ENCODE measurements at regions of chr22 and their contacts with region 1.

Region 1: DNA sequence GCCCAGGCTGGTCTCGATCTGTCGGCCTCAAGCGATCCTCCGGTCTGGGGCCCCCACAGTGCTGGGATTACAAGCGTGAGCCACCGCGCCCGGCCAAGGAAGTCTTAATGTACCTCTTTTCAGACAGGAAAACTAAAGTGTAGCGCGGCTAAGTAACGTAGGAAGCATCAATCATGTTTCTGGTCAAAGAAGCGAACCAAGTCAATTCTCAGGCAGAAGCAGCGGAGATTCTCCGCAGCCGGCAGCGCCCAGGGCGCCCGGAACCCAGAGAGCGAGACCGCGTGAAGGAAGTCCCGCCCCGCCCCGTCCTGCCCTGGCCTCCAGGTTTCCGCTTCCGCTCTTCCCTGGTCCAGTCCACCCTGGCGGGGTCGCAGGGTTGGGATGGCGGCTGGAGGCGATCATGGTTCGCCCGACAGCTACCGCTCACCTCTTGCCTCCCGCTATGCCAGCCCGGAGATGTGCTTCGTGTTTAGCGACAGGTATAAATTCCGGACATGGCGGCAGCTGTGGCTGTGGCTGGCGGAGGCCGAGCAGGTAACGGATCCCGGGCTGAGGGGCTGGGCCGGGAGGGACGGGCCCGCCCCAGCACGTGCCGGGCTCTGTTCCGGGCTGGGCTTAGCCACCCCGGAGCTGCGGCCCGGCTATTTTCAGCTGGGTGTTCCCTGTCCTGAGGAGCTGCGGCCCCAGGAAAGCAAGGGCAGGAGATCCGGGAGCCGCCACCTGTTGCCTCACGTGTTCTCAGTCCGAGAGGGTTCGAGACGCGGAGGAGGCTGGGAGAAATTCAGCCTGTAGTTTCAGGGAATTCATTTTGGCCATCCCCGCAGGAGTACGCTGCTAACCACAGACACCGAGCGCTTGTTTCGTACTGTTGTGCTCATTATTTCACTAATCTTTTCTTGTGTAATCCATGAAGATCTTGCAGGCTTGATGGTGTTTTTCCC is at the start of gene ADSL:
- DNase-seq: peak; percentile 92
- ATAC-seq: peak; percentile 90
- H3K4me3 Mint-ChIP-seq: peak within 1 kb of the TSS; percentile 96
- H3K27ac Mint-ChIP-seq: peak within 1 kb of the TSS; percentile 96
- H3K4me1 Mint-ChIP-seq: peaks cover 41% of the 10 kb centered on the region
- H3K27me3 Mint-ChIP-seq: no peaks in the 10 kb centered on the region
- CTCF ChIP-seq: no peak
- total RNA-seq, gene ADSL: 160 to 169 TPM

Region 2: GRCh38 chr22:40044102-40044869 is 302.2 kb before region 1 on chr22:
- CTCF ChIA-PET with region 1: interaction called, 35 read pairs
- POLR2A ChIA-PET with region 1: interaction called, 23 read pairs
- intact Hi-C with region 1: loop called (anchors 5 kb)
- DNase-seq: peak; percentile 99
- ATAC-seq: peak; percentile 88
- H3K4me3 Mint-ChIP-seq: peak overlapping the region; percentile 87
- H3K27ac Mint-ChIP-seq: peak overlapping the region; percentile 99
- H3K4me1 Mint-ChIP-seq: peaks cover 26% of the 10 kb centered on the region
- H3K27me3 Mint-ChIP-seq: no peaks in the 10 kb centered on the region
- CTCF ChIP-seq: no peak

Region 3: GRCh38 chr22:40107851-40108378 is 238.5 kb before region 1 on chr22:
- CTCF ChIA-PET with region 1: interaction called, 13 read pairs
- POLR2A ChIA-PET with region 1: interaction called, 3 read pairs
- intact Hi-C with region 1: no loop called
- DNase-seq: peak; percentile 65
- ATAC-seq: peak; percentile 78
- H3K4me3 Mint-ChIP-seq: peak overlapping the region; percentile 73
- H3K27ac Mint-ChIP-seq: peak overlapping the region; percentile 90
- H3K4me1 Mint-ChIP-seq: peaks cover 79% of the 10 kb centered on the region
- H3K27me3 Mint-ChIP-seq: no peaks in the 10 kb centered on the region
- CTCF ChIP-seq: no peak

Region 4: DNA sequence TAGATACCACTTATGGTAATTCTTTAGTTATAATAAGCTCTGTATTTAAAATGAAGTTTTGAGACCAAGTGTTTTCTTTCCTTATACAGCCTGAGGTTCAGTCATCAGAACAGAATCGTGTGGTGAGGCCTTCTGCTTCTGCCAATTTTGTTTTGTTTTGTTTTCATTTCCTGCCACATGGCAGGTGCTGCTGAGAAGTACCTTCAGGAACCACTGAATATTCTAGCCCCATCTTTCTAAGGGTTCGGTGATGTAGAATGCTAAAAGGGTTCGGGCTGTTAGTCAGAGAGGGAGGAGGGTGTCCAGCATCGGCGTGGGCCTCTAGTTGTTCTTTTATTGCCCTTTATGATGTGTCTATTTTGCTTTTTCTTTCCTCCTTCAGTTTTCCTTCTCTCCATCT is 142.9 kb before region 1 on chr22:
- CTCF ChIA-PET with region 1: interaction called, 13 read pairs
- POLR2A ChIA-PET with region 1: interaction called, 5 read pairs
- intact Hi-C with region 1: no loop called
- DNase-seq: peak; percentile 61
- ATAC-seq: peak; percentile 95
- H3K4me3 Mint-ChIP-seq: peak overlapping the region; percentile 42
- H3K27ac Mint-ChIP-seq: peak overlapping the region; percentile 90
- H3K4me1 Mint-ChIP-seq: peaks cover 64% of the 10 kb centered on the region
- H3K27me3 Mint-ChIP-seq: no peaks in the 10 kb centered on the region
- CTCF ChIP-seq: no peak

Region 5: GRCh38 chr22:40300884-40301672 is 45.4 kb before region 1 on chr22:
- CTCF ChIA-PET with region 1: interaction called, 25 read pairs
- POLR2A ChIA-PET with region 1: no interaction called
- intact Hi-C with region 1: no loop called
- DNase-seq: peak; percentile 39
- ATAC-seq: peak; percentile 71
- H3K4me3 Mint-ChIP-seq: no peak overlapping the region
- H3K27ac Mint-ChIP-seq: no peak overlapping the region
- H3K4me1 Mint-ChIP-seq: peaks cover 31% of the 10 kb centered on the region
- H3K27me3 Mint-ChIP-seq: no peaks in the 10 kb centered on the region
- CTCF ChIP-seq: no peak

Region 6: GRCh38 chr22:40334899-40335298 is 11.5 kb before region 1 on chr22:
- CTCF ChIA-PET with region 1: interaction called, 8 read pairs
- POLR2A ChIA-PET with region 1: interaction called, 31 read pairs
- intact Hi-C with region 1: no loop called
- DNase-seq: no peak
- ATAC-seq: peak; percentile 25
- H3K4me3 Mint-ChIP-seq: peak overlapping the region; percentile 33
- H3K27ac Mint-ChIP-seq: peak overlapping the region; percentile 86
- H3K4me1 Mint-ChIP-seq: peaks cover 77% of the 10 kb centered on the region
- H3K27me3 Mint-ChIP-seq: no peaks in the 10 kb centered on the region
- CTCF ChIP-seq: no peak

Measured in activated CD8-positive, alpha-beta T cell treated with anti-CD3 and anti-CD28 coated beads for 36 hours (primary cell).